ENCODE measurements at regions of chr17 and their contacts with region 1.

Region 1: GRCh38 chr17:78019367-78019975 is 61.0 kb downstream of the TNRC6C start:
- DNase-seq: no peak
- H3K4me3 ChIP-seq: no peak overlapping the region
- H3K27ac ChIP-seq: no peak overlapping the region
- H3K27me3 ChIP-seq: no peaks in the 10 kb centered on the region
- CTCF ChIP-seq: peak; percentile 65

Region 2: GRCh38 chr17:77881545-77881944 is 137.9 kb before region 1 on chr17:
- CTCF ChIA-PET with region 1: no interaction called
- POLR2A ChIA-PET with region 1: no interaction called
- DNase-seq: no peak
- H3K4me3 ChIP-seq: no peak overlapping the region
- H3K27ac ChIP-seq: no peak overlapping the region
- H3K27me3 ChIP-seq: peaks cover 20% of the 10 kb centered on the region
- CTCF ChIP-seq: no peak

Region 3: DNA sequence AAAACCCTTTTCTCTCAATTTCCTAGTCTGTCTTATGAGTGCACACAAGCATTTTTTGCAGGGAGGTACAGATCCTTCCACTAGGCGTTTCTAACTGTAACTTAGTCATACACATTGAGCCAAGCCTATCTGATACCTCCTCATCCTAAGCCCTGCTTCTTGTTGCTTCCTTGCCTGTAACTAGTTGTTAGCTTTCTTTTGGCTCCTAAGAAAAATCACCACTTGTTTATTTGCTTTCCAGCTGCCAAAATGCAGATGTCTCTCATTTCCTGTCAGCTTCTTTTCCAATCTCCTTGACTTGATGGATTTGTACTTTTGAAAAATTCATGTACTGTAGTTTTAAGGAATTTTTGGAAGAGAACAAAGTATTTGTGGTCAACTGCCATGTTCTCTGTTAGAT is 12.7 kb after region 1 on chr17:
- CTCF ChIA-PET with region 1: interaction called, 16 read pairs
- POLR2A ChIA-PET with region 1: no interaction called
- DNase-seq: no peak
- H3K4me3 ChIP-seq: no peak overlapping the region
- H3K27ac ChIP-seq: no peak overlapping the region
- H3K27me3 ChIP-seq: no peaks in the 10 kb centered on the region
- CTCF ChIP-seq: no peak

Region 4: DNA sequence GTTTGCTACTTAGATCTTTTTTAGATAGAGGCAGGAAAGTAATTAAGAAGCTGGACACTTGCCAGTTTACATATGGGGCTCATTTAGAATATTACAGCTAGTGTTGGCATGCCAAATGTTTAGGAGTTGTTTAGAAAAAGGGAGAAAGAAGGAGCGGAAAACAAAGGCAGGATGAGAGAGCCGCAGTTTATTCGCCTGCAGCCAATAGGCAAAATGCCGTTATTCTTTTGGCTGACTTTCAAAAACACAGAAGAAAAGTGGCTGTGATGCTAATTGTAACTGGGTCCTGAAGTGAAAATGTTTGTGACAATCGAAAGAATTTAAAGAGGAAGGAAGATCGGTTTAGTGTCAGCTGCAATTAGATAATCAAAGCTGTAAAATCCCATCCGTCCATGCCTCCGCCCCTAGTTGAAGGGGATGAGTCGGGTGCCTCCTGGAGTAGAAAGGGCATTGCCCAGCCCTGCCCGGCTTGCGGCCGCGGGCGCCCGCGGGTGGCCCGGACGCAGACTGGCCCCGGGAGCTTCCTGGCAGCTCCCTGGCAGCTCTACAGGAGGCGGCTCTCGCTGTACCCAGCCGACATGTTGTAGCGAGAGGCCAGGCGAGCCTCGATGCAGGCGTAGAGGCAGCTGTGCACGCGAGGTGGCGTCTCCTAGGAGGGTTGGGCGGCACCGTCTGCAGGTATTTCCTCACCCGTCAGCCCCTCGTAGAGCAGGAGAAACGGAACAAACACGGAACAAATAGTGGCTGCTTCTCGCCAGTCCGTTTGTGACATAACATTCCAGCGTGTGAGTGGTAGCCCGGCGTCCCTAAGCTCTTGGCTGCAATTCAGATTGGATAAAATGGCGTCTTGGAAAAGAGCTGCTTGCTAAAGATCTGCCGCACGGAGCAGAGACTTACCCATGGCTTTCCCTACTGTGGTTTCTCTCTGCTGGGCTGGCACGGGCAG is 21.2 kb after region 1 on chr17:
- CTCF ChIA-PET with region 1: interaction called, 23 read pairs
- POLR2A ChIA-PET with region 1: no interaction called
- DNase-seq: no peak
- H3K4me3 ChIP-seq: peak overlapping the region; percentile 73
- H3K27ac ChIP-seq: peak overlapping the region; percentile 89
- H3K27me3 ChIP-seq: no peaks in the 10 kb centered on the region
- CTCF ChIP-seq: peak; percentile 17; the same call in 1 of the 2 replicates

Region 5: DNA sequence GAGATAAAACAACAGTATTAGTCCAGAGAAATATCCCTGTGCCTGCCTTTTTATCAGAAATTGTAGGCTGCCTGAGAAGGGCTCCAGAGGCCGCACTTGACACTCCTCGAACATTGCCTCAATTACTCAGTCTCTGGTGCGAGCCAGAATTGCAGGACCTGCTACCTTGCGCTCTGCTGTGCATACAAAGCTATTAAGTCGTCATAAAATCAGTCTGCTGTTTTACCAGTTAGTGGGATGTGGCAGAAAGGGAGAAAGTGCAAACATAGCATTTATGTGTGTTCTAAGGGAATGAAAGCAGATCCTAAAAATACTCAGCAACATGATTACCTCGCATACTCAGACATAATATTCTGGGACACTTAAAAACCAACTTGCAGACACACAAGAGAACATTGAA is 38.5 kb after region 1 on chr17:
- CTCF ChIA-PET with region 1: interaction called, 11 read pairs
- POLR2A ChIA-PET with region 1: no interaction called
- DNase-seq: no peak
- H3K4me3 ChIP-seq: no peak overlapping the region
- H3K27ac ChIP-seq: no peak overlapping the region
- H3K27me3 ChIP-seq: no peaks in the 10 kb centered on the region
- CTCF ChIP-seq: no peak